Common myeloid progenitor, CD34-positive (primary cell): ENCODE measurements at regions of chr11 and their contacts with region 1.

Region 1: DNA sequence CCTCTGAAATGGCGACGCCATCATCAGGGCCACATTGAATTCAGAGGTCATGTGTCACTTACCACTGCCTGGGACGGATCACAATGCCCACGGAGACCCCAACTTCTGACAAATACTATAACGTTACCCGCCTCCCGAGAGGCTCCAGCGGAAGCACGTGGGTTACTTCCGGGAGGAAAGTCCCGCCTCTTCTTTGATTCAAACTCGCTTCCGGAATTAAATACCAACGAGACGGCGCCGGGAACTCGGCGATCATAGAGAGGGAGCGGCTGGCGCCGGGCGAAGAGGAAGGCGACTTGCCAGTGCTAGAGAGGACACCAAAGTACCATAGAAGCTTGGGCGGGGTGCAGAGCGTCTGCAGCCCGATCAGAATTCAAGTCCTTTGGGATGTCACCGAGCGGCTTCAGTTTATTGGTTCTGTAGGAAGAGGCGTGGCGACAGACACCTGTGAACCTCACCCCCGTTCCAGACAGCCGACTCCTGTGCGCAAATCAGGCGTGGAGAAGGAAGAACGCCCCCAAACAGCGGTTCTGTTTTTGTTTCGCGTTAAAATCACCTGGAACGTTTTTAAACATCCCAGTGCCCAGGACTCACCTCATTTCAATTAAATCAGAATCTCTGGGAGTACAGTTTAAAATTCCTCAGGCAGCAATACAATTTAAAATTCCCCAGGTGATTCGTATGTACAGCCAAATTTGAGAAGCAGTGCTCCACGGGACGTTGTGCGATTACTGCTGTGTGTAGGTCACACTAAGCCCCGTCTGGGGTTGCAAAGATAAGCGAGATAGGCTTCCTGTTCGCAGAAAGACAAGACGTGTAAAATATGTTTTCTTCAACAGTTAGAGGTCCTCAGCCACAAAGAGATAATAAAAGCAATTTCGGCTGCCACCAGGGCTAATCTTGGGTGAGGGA is at the start of gene TIMM10:
- DNase-seq: peak; percentile 97 to 98 (median 98)
- H3K4me3 ChIP-seq: peak within 1 kb of the TSS; percentile 62 to 96 (median 85)
- H3K27ac ChIP-seq: peak within 1 kb of the TSS; percentile 67 to 88
- H3K4me1 ChIP-seq: peaks cover 7 to 32% (median 19%) of the 10 kb centered on the region in 4 experiments
- H3K27me3 ChIP-seq: no peaks in the 10 kb centered on the region

Region 2: GRCh38 chr11:57410287-57410686 is 120.6 kb before region 1 on chr11:
- CTCF ChIA-PET with region 1: no interaction called
- POLR2A ChIA-PET with region 1: no interaction called
- DNase-seq: peak in 1 of 3 donors; percentile 8
- H3K4me3 ChIP-seq: no peak overlapping the region
- H3K27ac ChIP-seq: no peak overlapping the region
- H3K4me1 ChIP-seq: peaks cover 4 to 47% (median 38%) of the 10 kb centered on the region in 4 experiments
- H3K27me3 ChIP-seq: no peaks in the 10 kb centered on the region

Region 3: DNA sequence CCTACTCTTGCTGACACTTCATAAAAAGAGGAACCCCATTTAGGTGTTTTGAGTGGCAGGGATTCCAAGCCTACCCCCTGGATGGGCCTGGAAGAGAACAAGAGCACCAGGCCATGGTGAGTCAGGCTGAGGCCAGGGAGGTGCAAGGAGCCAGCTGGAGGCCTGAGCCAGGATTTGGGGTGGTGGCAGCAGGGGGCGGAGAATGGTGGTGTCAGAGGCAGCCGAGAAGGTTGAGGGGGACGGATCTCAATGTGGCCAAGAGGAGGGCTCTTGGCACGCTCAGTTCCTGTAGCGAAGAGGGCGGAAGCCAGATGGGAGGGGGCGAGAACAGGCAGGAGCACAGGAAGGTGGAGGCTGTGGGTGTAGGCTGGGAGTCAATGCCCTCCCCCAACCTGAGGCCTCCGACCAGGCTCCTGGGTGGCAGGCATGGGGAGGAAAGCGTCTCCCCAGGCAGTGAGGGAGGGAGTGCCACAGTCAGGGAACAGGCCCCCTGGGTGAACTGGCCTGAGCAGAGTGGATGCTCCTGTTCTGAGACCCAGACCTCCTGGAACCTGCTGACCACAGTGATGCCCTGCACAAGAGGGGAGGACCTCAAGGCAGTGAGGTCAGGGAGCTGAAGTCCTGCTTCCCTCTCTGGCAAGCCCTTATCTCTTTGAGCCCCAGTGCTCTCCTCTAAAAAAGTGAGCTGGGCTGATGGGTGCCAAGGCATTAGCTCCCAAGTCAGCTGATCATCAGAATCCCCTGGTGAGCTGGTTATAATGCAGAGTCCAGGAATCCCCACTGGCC is 56.6 kb before region 1 on chr11:
- CTCF ChIA-PET with region 1: interaction called, 13 read pairs
- POLR2A ChIA-PET with region 1: no interaction called
- DNase-seq: peak; percentile 73 to 90 (median 89)
- H3K4me3 ChIP-seq: peak overlapping the region in 4 of 7 experiments; percentile 32 to 57 (median 50)
- H3K27ac ChIP-seq: peak overlapping the region in 1 of 2 experiments; percentile 30
- H3K4me1 ChIP-seq: peaks cover 7 to 44% (median 39%) of the 10 kb centered on the region in 4 experiments
- H3K27me3 ChIP-seq: no peaks in the 10 kb centered on the region

Region 4: GRCh38 chr11:57499413-57499982 is 31.4 kb before region 1 on chr11:
- CTCF ChIA-PET with region 1: interaction called, 410 read pairs
- POLR2A ChIA-PET with region 1: no interaction called
- DNase-seq: peak; percentile 64 to 72 (median 68)
- H3K4me3 ChIP-seq: peak overlapping the region in 4 of 7 experiments; percentile 29 to 58 (median 54)
- H3K27ac ChIP-seq: no peak overlapping the region
- H3K4me1 ChIP-seq: peaks cover 0 to 11% (median 5%) of the 10 kb centered on the region in 4 experiments
- H3K27me3 ChIP-seq: no peaks in the 10 kb centered on the region

Region 5: DNA sequence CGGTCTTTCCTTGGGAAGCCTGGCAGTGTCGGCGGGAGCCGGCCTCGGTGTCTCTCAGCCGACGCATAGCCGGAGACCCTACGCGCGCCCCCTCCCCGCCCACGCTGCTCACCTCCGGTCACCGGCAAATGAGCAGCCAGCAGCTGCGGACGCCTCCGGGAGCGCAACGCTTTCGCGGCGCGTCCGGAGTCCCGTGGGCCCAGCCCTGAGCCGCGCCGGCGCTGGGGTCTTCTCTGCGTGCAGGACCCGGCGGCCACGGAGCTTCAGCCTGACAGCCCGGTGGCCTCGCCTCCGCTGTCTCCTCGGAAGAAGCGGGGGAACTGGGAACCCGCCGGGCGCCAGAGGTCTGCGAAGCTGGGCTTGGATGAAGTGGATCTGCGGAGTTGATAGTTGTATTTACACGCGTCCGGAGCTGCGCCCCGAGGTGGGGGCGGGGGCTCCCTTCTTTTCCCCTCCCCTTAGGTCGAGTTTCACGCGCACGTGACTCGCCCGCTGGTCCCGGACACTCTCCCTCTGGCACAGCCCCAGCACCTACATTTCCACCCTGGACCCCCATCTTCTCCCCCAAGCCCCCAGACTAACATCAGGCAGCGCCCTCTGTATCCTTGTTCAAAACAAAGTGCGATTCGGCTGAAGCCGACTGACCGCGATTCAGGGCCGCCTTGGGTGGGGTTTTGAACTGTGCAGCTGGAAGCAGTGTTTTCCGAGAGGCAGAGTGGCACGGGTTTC is 15.4 kb before region 1 on chr11 and contains the start of gene SLC43A1:
- CTCF ChIA-PET with region 1: interaction called, 132 read pairs
- POLR2A ChIA-PET with region 1: no interaction called
- DNase-seq: peak; percentile 31 to 44 (median 38)
- H3K4me3 ChIP-seq: peak within 1 kb of the TSS; percentile 75 to 95 (median 89)
- H3K27ac ChIP-seq: peak within 1 kb of the TSS in 1 of 2 experiments; percentile 49
- H3K4me1 ChIP-seq: peaks cover 4 to 32% (median 26%) of the 10 kb centered on the region in 4 experiments
- H3K27me3 ChIP-seq: no peaks in the 10 kb centered on the region